ENCODE measurements at regions of chr11 and their contacts with region 1.

Region 1: GRCh38 chr11:102933627-102934026 is 21.9 kb downstream of the MMP13 start:
- DNase-seq: no peak
- H3K4me3 ChIP-seq: no peak overlapping the region
- H3K27ac ChIP-seq: no peak overlapping the region
- H3K4me1 ChIP-seq: no peaks in the 10 kb centered on the region
- H3K27me3 ChIP-seq: no peaks in the 10 kb centered on the region
- CTCF ChIP-seq: peak in 1 of 3 experiments; percentile 19; a peak in 1 of 4 replicates
- EP300 ChIP-seq: no peak
- POLR2A ChIP-seq: no peak
- RAD21 ChIP-seq: peak in 1 of 2 experiments; percentile 7; a peak in 1 of 4 replicates

Region 2: GRCh38 chr11:102840018-102840417 is 93.6 kb before region 1 on chr11:
- CTCF ChIA-PET with region 1: no interaction called
- POLR2A ChIA-PET with region 1: no interaction called
- DNase-seq: no peak
- H3K4me3 ChIP-seq: no peak overlapping the region
- H3K27ac ChIP-seq: no peak overlapping the region
- H3K4me1 ChIP-seq: peaks cover 0 to 7% (median 1%) of the 10 kb centered on the region in 4 experiments; a peak in 4 of 7 replicates
- H3K27me3 ChIP-seq: no peaks in the 10 kb centered on the region
- CTCF ChIP-seq: no peak
- EP300 ChIP-seq: no peak
- POLR2A ChIP-seq: no peak
- RAD21 ChIP-seq: no peak

Region 3: GRCh38 chr11:102920118-102920684 is 13.4 kb before region 1 on chr11:
- CTCF ChIA-PET with region 1: interaction called, 60 read pairs
- POLR2A ChIA-PET with region 1: no interaction called
- DNase-seq: no peak
- H3K4me3 ChIP-seq: no peak overlapping the region
- H3K27ac ChIP-seq: no peak overlapping the region
- H3K4me1 ChIP-seq: no peaks in the 10 kb centered on the region
- H3K27me3 ChIP-seq: no peaks in the 10 kb centered on the region
- CTCF ChIP-seq: no peak
- EP300 ChIP-seq: no peak
- POLR2A ChIP-seq: no peak
- RAD21 ChIP-seq: no peak

Region 4: GRCh38 chr11:103035791-103036434 is 102.3 kb after region 1 on chr11:
- CTCF ChIA-PET with region 1: no interaction called
- POLR2A ChIA-PET with region 1: no interaction called
- DNase-seq: no peak
- H3K4me3 ChIP-seq: no peak overlapping the region
- H3K27ac ChIP-seq: no peak overlapping the region
- H3K4me1 ChIP-seq: no peaks in the 10 kb centered on the region; a peak in 1 of 7 replicates
- H3K27me3 ChIP-seq: no peaks in the 10 kb centered on the region
- CTCF ChIP-seq: peak in 2 of 3 experiments; percentile 18 to 70; a peak in 2 of 4 replicates
- EP300 ChIP-seq: no peak
- POLR2A ChIP-seq: no peak
- RAD21 ChIP-seq: peak; percentile 44 to 46